ENCODE measurements at regions of chr1 and their contacts with region 1.

Region 1: DNA sequence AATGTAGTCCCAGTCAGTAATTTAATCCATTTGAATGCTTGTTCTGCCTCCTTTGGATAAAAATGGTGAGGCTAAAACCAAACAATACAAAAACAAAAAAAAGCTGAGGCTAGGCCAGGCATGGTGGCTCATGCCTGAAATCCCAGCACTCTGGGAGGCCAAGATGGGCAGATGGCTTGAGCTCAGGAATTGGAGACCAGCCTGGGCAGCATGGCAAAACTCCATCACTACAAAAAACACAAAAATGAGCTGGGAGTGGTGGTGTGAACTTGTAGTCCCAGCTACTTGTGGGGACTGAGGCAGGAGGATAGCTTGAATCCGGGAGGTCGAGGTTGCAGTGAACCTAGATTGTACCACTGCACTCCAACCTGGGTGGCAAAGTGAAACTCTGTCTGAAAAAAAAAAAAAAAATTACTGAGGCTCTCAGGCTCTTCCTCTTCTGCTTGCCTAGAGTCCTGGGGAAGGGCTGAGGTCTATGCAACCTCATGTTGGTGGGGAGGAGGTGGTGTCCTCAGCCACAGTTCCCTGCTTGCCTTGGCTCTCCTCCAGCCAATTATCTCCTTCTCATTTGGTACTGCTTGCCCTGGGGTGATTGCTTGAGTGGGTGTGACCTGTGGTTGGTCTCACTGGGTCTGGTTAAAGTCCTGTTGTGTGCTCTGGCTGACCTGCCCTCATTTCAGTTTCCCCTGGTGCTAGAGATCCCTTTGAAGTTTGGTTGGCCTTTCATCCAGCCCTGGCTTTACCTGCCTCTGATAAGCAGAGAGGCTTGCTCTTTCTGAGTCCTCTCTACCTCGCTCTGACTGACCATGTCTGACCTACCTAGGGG is 20.9 kb downstream of the S1PR1 start:
- DNase-seq: peak; percentile 80 to 94 (median 94)
- H3K4me3 ChIP-seq: peak overlapping the region in 3 of 7 experiments; percentile 36 to 47 (median 38)
- H3K27ac ChIP-seq: peak overlapping the region in 1 of 2 experiments; percentile 67
- H3K4me1 ChIP-seq: peaks cover 40 to 59% (median 53%) of the 10 kb centered on the region in 4 experiments
- H3K27me3 ChIP-seq: no peaks in the 10 kb centered on the region

Region 2: GRCh38 chr1:101228424-101229134 is 29.1 kb before region 1 on chr1:
- CTCF ChIA-PET with region 1: no interaction called
- POLR2A ChIA-PET with region 1: no interaction called
- DNase-seq: no peak
- H3K4me3 ChIP-seq: no peak overlapping the region
- H3K27ac ChIP-seq: no peak overlapping the region
- H3K4me1 ChIP-seq: no peaks in the 10 kb centered on the region
- H3K27me3 ChIP-seq: no peaks in the 10 kb centered on the region

Region 3: GRCh38 chr1:101247404-101248287 is 10.1 kb before region 1 on chr1:
- CTCF ChIA-PET with region 1: interaction called, 17 read pairs
- POLR2A ChIA-PET with region 1: interaction called, 3 read pairs
- DNase-seq: peak in 1 of 3 donors; percentile 12
- H3K4me3 ChIP-seq: no peak overlapping the region
- H3K27ac ChIP-seq: no peak overlapping the region
- H3K4me1 ChIP-seq: peaks cover 0 to 11% (median 0%) of the 10 kb centered on the region in 4 experiments
- H3K27me3 ChIP-seq: no peaks in the 10 kb centered on the region

Measured in common myeloid progenitor, CD34-positive (primary cell).